HCT116 (cell line): ENCODE measurements at regions of chr19 and their contacts with region 1.

Region 1: GRCh38 chr19:6737284-6738046 is at the start of gene GPR108:
- DNase-seq: peak; percentile 100
- ATAC-seq: peak; percentile 72
- H3K4me3 ChIP-seq: peak within 1 kb of the TSS; percentile 99
- H3K27ac ChIP-seq: peak within 1 kb of the TSS; percentile 87
- H3K4me1 ChIP-seq: peaks cover 32 to 44% of the 10 kb centered on the region in 2 experiments
- H3K27me3 ChIP-seq: no peaks in the 10 kb centered on the region
- CTCF ChIP-seq: no peak
- POLR2A ChIP-seq: no peak
- RAD21 ChIP-seq: no peak
- total RNA-seq, gene GPR108: 75.0 TPM

Region 2: DNA sequence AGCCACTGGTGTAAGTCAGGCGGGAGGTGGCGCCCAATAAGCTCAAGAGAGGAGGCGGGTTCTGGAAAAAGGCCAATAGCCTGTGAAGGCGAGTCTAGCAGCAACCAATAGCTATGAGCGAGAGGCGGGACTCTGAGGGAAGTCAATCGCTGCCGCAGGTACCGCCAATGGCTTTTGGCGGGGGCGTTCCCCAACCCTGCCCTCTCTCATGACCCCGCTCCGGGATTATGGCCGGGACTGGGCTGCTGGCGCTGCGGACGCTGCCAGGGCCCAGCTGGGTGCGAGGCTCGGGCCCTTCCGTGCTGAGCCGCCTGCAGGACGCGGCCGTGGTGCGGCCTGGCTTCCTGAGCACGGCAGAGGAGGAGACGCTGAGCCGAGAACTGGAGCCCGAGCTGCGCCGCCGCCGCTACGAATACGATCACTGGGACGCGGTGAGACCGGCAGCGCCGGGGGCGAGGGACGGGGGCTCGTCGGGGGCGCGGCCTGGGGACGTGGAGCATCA is 364.8 kb before region 1 on chr19 and contains the start of gene ALKBH7:
- CTCF ChIA-PET with region 1: no interaction called
- POLR2A ChIA-PET with region 1: no interaction called
- RAD21 ChIA-PET with region 1: no interaction called
- intact Hi-C with region 1: loop called (anchors 5 kb)
- DNase-seq: peak; percentile 100
- ATAC-seq: peak; percentile 85
- H3K4me3 ChIP-seq: peak within 1 kb of the TSS; percentile 72 to 95
- H3K27ac ChIP-seq: peak within 1 kb of the TSS; percentile 86
- H3K4me1 ChIP-seq: peaks cover 5 to 16% of the 10 kb centered on the region in 2 experiments; a peak in 3 of 4 replicates
- H3K27me3 ChIP-seq: no peaks in the 10 kb centered on the region
- CTCF ChIP-seq: no peak
- POLR2A ChIP-seq: peak; percentile 9
- RAD21 ChIP-seq: no peak
- total RNA-seq, gene ALKBH7: 57.1 TPM

Region 3: DNA sequence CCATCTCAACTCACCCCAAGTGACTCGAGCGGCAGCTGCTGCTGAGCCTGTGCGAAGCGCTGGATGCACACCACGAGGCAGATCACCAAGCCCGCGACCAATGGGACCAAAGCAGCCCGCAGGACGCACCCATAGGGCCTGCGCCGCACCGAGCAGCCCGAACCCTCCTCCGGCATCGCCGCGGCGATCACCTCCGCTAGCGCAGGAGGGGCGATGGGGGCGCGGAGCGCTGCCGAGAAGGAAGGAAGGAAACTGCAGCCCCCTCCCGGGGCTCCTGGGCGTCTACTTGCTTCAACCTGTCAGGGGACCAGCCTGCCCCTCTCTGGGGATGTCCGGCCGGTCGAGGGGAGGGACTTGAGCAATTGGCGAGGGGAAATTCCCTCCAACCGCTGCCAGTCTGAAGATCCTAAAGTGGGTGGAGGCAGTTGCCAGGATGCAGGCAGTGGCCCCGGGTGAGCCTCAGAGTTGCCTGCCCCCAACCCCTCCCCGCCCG is 146.6 kb before region 1 on chr19 and contains the start of gene CD70:
- CTCF ChIA-PET with region 1: no interaction called
- POLR2A ChIA-PET with region 1: no interaction called
- RAD21 ChIA-PET with region 1: no interaction called
- intact Hi-C with region 1: no loop called
- DNase-seq: no peak
- ATAC-seq: no peak
- H3K4me3 ChIP-seq: no peak within 1 kb of the TSS
- H3K27ac ChIP-seq: no peak within 1 kb of the TSS
- H3K4me1 ChIP-seq: peaks cover 10 to 22% of the 10 kb centered on the region in 2 experiments
- H3K27me3 ChIP-seq: peaks cover 15% of the 10 kb centered on the region; the same call in 1 of the 2 replicates
- CTCF ChIP-seq: no peak
- POLR2A ChIP-seq: no peak
- RAD21 ChIP-seq: no peak
- total RNA-seq, gene CD70: 2.1 TPM

Region 4: DNA sequence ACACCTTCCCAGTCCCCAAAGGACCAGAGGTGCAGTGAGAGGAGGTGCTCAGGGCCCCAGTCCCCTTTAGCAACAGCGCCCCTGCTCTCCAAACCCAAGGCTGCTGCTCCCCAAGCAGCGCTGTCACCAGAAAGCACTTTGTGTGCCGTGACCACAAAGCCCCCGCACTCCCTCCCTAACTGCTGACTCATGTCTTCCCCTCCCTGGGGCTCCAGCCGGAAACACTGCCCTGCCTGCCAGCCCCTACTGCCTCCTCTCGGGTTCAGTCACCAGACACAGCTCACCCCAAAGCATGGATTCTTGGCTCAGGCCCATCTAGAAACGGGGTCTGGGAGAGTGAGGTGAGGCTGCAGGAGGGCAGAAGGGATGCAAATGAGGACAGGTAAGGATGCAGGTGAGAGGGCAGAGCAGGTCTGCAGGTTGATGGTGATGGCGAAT is 62.6 kb before region 1 on chr19:
- CTCF ChIA-PET with region 1: no interaction called
- POLR2A ChIA-PET with region 1: no interaction called
- RAD21 ChIA-PET with region 1: no interaction called
- intact Hi-C with region 1: no loop called
- DNase-seq: no peak
- ATAC-seq: peak; percentile 88
- H3K4me3 ChIP-seq: peak overlapping the region; percentile 28 to 39
- H3K27ac ChIP-seq: peak overlapping the region; percentile 5; the same call in 1 of the 2 replicates
- H3K4me1 ChIP-seq: peaks cover 12 to 30% of the 10 kb centered on the region in 2 experiments
- H3K27me3 ChIP-seq: no peaks in the 10 kb centered on the region
- CTCF ChIP-seq: 0 out of 6 replicates have a peak, but pooled peaks of 1 of the 3 experiments have one; percentile 16
- POLR2A ChIP-seq: no peak
- RAD21 ChIP-seq: no peak; the same call in 1 of the 2 replicates

Region 5: GRCh38 chr19:6753178-6754031 is 15.9 kb after region 1 on chr19:
- CTCF ChIA-PET with region 1: interaction called, 3 read pairs
- POLR2A ChIA-PET with region 1: interaction called, 10 read pairs
- RAD21 ChIA-PET with region 1: interaction called in 1 of 2 experiments, 4 read pairs
- intact Hi-C with region 1: no loop called
- DNase-seq: peak; percentile 91
- ATAC-seq: peak; percentile 88
- H3K4me3 ChIP-seq: peak overlapping the region; percentile 26 to 45
- H3K27ac ChIP-seq: peak overlapping the region; percentile 88
- H3K4me1 ChIP-seq: peaks cover 13 to 31% of the 10 kb centered on the region in 2 experiments; a peak in 3 of 4 replicates
- H3K27me3 ChIP-seq: no peaks in the 10 kb centered on the region
- CTCF ChIP-seq: peak in 2 of 3 experiments; percentile 25 to 43; a peak in 4 of 6 replicates
- POLR2A ChIP-seq: peak; percentile 51
- RAD21 ChIP-seq: peak; percentile 78

Region 6: DNA sequence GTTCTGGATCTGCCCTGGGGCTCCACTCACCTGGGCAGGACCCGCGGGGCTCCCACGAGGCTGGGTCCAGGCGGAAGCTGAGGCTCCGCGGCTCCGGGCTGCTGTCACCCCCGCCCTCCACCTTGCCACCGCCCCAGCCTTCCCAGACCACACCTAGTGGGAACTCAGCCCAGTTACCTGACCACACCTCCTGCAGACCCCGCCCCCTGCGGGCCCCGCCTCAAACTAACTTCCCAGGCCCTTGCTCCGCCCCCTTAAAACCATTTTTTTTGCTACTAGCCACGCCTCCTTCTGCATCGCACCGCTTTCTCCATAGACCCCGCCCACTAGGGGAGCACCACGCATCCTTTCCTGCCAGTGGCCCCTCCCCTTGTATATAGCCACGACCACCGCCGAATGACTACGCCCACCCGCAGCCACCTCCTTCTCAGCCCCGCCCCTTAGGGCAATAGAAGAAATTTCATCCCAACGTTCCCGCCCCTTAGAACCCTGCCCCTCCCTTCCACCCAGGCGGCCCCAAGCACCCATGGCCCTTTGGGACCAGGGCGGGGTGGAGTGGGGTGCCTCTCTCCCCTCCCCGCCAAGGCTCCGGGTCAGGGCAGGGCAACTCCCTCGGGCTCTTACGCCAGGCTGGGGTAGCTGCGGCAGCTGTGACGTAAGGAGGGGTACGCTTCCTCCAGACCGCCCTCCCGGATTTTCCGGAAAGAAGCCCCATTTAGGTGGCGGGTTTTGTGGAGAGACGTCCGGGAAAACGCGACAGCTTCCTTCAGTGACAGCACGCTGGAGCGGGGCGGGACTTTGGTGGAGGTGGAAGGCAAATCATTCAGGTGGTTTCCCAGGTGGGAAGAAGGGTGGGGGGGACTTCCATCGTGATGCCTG is 30.1 kb after region 1 on chr19 and contains the start of gene SH2D3A:
- CTCF ChIA-PET with region 1: interaction called, 6 read pairs
- POLR2A ChIA-PET with region 1: interaction called, 3 read pairs
- RAD21 ChIA-PET with region 1: interaction called, 3 to 6 read pairs
- intact Hi-C with region 1: loop called (anchors 1 kb)
- DNase-seq: peak; percentile 96
- ATAC-seq: peak; percentile 81
- H3K4me3 ChIP-seq: peak within 1 kb of the TSS; percentile 71 to 96
- H3K27ac ChIP-seq: peak within 1 kb of the TSS; percentile 93
- H3K4me1 ChIP-seq: peaks cover 24 to 50% of the 10 kb centered on the region in 2 experiments
- H3K27me3 ChIP-seq: no peaks in the 10 kb centered on the region
- CTCF ChIP-seq: 0 out of 6 replicates have a peak, but pooled peaks of 1 of the 3 experiments have one; percentile 0
- POLR2A ChIP-seq: no peak
- RAD21 ChIP-seq: no peak
- total RNA-seq, gene SH2D3A: 75.7 TPM

Region 7: DNA sequence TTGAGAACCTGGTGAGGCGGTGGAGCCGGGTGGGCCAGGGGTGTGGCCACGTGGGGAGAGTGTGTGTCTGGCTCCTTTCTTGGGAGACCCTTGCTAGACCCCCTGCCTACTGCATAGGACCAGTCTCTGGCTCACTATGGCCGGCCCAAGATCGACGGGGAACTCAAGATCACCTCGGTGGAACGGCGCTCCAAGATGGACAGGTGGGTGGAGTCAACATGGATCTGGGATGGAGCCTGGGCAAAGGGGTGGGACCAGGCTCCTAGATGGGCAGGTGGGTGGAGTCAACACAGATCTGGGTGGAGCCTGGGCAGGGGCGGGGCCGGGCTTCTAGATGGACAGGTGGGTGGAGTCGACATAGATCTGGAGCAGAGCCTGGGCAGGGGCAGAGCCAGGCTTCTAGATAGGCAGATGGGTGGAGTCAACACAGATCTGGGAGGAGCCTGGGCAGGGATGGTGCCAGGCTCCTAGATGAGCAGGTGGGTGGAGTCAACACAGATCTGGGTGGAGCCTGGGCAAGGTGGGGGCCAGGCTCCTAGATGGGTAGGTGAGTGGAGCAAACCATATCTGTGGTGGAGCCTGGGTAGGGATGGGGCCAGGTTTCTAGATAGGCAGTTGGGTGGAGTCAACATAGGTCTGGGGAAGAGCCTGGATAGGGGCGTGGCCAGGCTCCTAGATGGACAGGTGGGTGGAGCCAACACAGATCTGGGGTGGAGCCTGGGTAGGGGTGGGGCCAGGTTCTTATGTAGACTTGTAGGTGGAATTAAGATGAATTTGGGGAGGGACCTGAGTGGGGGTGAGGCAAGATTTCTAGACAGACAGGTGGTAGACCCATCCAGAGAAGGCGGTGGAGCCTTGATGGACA is 91.5 kb after region 1 on chr19:
- CTCF ChIA-PET with region 1: interaction called, 3 read pairs
- POLR2A ChIA-PET with region 1: interaction called, 5 read pairs
- RAD21 ChIA-PET with region 1: no interaction called
- intact Hi-C with region 1: loop called (anchors 1 kb)
- DNase-seq: peak; percentile 98
- ATAC-seq: peak; percentile 84
- H3K4me3 ChIP-seq: peak overlapping the region; percentile 79 to 84
- H3K27ac ChIP-seq: peak overlapping the region; percentile 67
- H3K4me1 ChIP-seq: peaks cover 14 to 24% of the 10 kb centered on the region in 2 experiments
- H3K27me3 ChIP-seq: no peaks in the 10 kb centered on the region
- CTCF ChIP-seq: no peak
- POLR2A ChIP-seq: no peak
- RAD21 ChIP-seq: no peak